ENCODE measurements at regions of chr12 and their contacts with region 1.

Region 1: GRCh38 chr12:50246873-50247612 is 36.3 kb downstream of the LIMA1 start:
- DNase-seq: peak; percentile 51
- CTCF ChIP-seq: no peak

Region 2: GRCh38 chr12:50032639-50033581 is 214.1 kb before region 1 on chr12:
- CTCF ChIA-PET with region 1: no interaction called
- POLR2A ChIA-PET with region 1: no interaction called
- DNase-seq: no peak
- CTCF ChIP-seq: no peak

Region 3: GRCh38 chr12:50222275-50222795 is 24.7 kb before region 1 on chr12:
- CTCF ChIA-PET with region 1: interaction called, 10 read pairs
- POLR2A ChIA-PET with region 1: interaction called, 3 read pairs
- DNase-seq: peak; percentile 50
- CTCF ChIP-seq: no peak

Region 4: GRCh38 chr12:50234347-50234746 is 12.7 kb before region 1 on chr12:
- CTCF ChIA-PET with region 1: no interaction called
- POLR2A ChIA-PET with region 1: no interaction called
- DNase-seq: no peak
- CTCF ChIP-seq: no peak

Region 5: GRCh38 chr12:50257686-50258551 is 10.9 kb after region 1 on chr12:
- CTCF ChIA-PET with region 1: interaction called, 10 read pairs
- POLR2A ChIA-PET with region 1: no interaction called
- DNase-seq: no peak
- CTCF ChIP-seq: no peak